Activated CD8-positive, alpha-beta T cell treated with anti-CD3 and anti-CD28 coated beads for 36 hours (primary cell): ENCODE measurements at regions of chr4 and their contacts with region 1.

Region 1: DNA sequence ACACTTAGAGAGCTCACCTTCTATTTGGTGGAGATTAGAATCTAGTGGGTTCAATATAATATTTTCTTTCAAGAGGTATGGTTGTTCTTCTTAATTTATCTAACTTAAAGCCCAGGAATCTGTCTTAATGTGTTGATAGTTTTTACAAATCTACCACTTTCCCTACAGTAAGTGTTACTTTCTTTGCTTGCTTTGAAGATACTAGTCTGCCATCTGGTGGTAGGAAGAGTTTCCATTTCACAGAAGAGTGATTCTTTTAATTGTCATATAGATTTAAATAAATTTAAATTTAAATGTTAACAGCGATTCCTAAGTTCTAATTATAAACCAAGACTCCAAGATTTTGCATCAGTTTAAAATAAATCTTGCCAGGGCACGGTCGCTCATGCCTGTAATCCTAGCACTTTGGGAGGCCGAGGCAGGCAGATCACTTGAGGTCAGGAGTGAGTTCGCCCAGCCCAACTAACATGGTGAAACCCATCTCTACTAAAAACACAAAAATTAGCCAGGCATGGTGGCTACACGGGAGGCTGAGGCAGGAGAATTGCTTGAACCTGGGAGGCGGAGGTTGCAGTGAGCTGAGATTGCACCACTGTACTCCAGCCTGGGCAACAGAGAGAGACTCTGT is 43.5 kb downstream of the NUDT9 start:
- DNase-seq: peak; percentile 7
- ATAC-seq: no peak
- H3K4me3 Mint-ChIP-seq: no peak overlapping the region
- H3K27ac Mint-ChIP-seq: no peak overlapping the region
- H3K4me1 Mint-ChIP-seq: peaks cover 2% of the 10 kb centered on the region
- H3K27me3 Mint-ChIP-seq: no peaks in the 10 kb centered on the region
- CTCF ChIP-seq: peak; percentile 92

Region 2: GRCh38 chr4:87353592-87353991 is 112.3 kb before region 1 on chr4:
- CTCF ChIA-PET with region 1: interaction called, 36 read pairs
- POLR2A ChIA-PET with region 1: no interaction called
- intact Hi-C with region 1: loop called (anchors 5 kb)
- DNase-seq: peak; percentile 55
- ATAC-seq: peak; percentile 49
- H3K4me3 Mint-ChIP-seq: no peak overlapping the region
- H3K27ac Mint-ChIP-seq: no peak overlapping the region
- H3K4me1 Mint-ChIP-seq: no peaks in the 10 kb centered on the region
- H3K27me3 Mint-ChIP-seq: no peaks in the 10 kb centered on the region
- CTCF ChIP-seq: peak; percentile 67

Region 3: GRCh38 chr4:87382116-87382515 is 83.7 kb before region 1 on chr4:
- CTCF ChIA-PET with region 1: interaction called, 106 read pairs
- POLR2A ChIA-PET with region 1: no interaction called
- intact Hi-C with region 1: loop called (anchors 2 kb)
- DNase-seq: no peak
- ATAC-seq: no peak
- H3K4me3 Mint-ChIP-seq: no peak overlapping the region
- H3K27ac Mint-ChIP-seq: no peak overlapping the region
- H3K4me1 Mint-ChIP-seq: peaks cover 27% of the 10 kb centered on the region
- H3K27me3 Mint-ChIP-seq: no peaks in the 10 kb centered on the region
- CTCF ChIP-seq: no peak

Region 4: GRCh38 chr4:87481377-87481776 is 15.5 kb after region 1 on chr4:
- CTCF ChIA-PET with region 1: interaction called, 20 read pairs
- POLR2A ChIA-PET with region 1: no interaction called
- intact Hi-C with region 1: no loop called
- DNase-seq: no peak
- ATAC-seq: no peak
- H3K4me3 Mint-ChIP-seq: no peak overlapping the region
- H3K27ac Mint-ChIP-seq: no peak overlapping the region
- H3K4me1 Mint-ChIP-seq: no peaks in the 10 kb centered on the region
- H3K27me3 Mint-ChIP-seq: no peaks in the 10 kb centered on the region
- CTCF ChIP-seq: no peak

Region 5: GRCh38 chr4:87543835-87544461 is 78.1 kb after region 1 on chr4:
- CTCF ChIA-PET with region 1: no interaction called
- POLR2A ChIA-PET with region 1: no interaction called
- intact Hi-C with region 1: no loop called
- DNase-seq: peak; percentile 4
- ATAC-seq: no peak
- H3K4me3 Mint-ChIP-seq: no peak overlapping the region
- H3K27ac Mint-ChIP-seq: no peak overlapping the region
- H3K4me1 Mint-ChIP-seq: no peaks in the 10 kb centered on the region
- H3K27me3 Mint-ChIP-seq: no peaks in the 10 kb centered on the region
- CTCF ChIP-seq: peak; percentile 27